ENCODE measurements at regions of chr3 and their contacts with region 1.

Region 1: GRCh38 chr3:170257145-170257544 is 34.9 kb downstream of the PRKCI start:
- DNase-seq: no peak
- ATAC-seq: peak; percentile 80
- H3K4me3 ChIP-seq: no peak overlapping the region; the same call in 1 of the 2 replicates
- H3K27ac ChIP-seq: no peak overlapping the region; the same call in 1 of the 2 replicates
- H3K4me1 ChIP-seq: peaks cover 26% of the 10 kb centered on the region
- H3K27me3 ChIP-seq: no peaks in the 10 kb centered on the region
- CTCF ChIP-seq: no peak
- EP300 ChIP-seq: peak; percentile 48 to 61; a peak in 3 of 4 replicates
- POLR2A ChIP-seq: no peak
- RAD21 ChIP-seq: no peak

Region 2: GRCh38 chr3:170180908-170181879 is 76.0 kb before region 1 on chr3 and contains the start of gene PHC3:
- CTCF ChIA-PET with region 1: interaction called, 3 read pairs
- POLR2A ChIA-PET with region 1: no interaction called
- RAD21 ChIA-PET with region 1: no interaction called
- SMC1A ChIA-PET with region 1: no interaction called
- in situ Hi-C with region 1: no loop called
- intact Hi-C with region 1: loop called (anchors 5 kb)
- DNase-seq: peak; percentile 73
- ATAC-seq: peak; percentile 80
- H3K4me3 ChIP-seq: peak within 1 kb of the TSS; percentile 89
- H3K27ac ChIP-seq: peak within 1 kb of the TSS; percentile 98
- H3K4me1 ChIP-seq: peaks cover 3% of the 10 kb centered on the region
- H3K27me3 ChIP-seq: no peaks in the 10 kb centered on the region
- CTCF ChIP-seq: 0 out of 6 replicates have a peak, but pooled peaks of 1 of the 3 experiments have one; percentile 17
- EP300 ChIP-seq: no peak
- POLR2A ChIP-seq: peak; percentile 79
- RAD21 ChIP-seq: no peak
- polyA plus RNA-seq, gene PHC3: 3.3 to 5.8 TPM

Region 3: DNA sequence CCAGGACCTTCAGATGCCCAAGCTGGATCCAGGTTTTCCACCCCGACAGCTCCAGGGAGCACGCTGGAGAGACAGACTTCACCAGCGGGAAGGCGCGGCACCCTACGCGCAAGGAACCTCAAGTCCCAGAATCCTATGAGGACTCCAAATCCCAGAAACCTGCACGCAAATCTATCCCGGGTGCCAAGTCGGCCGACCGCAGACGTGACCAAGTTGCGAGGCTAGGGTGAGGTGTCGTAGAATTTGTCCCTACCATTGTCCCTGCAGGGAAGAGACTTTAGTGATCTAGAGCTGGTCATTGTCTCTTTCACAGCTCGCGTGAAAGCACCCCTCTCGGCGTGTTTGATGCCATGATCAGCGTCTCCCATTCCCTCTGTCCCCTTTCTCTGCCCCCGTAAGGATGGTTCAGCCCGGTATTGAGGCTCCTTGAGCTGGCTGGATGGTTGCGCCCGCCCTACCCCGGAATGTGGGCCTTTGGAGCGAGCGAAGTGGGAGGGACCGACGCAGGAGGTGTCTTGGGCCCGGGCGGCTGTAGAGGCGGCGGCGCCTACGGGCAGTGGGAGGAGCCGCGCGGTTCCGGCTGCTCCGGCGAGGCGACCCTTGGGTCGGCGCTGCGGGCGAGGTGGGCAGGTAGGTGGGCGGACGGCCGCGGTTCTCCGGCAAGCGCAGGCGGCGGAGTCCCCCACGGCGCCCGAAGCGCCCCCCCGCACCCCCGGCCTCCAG is 35.1 kb before region 1 on chr3 and contains the start of gene PRKCI:
- CTCF ChIA-PET with region 1: interaction called, 5 read pairs
- POLR2A ChIA-PET with region 1: no interaction called
- RAD21 ChIA-PET with region 1: interaction called, 4 read pairs
- SMC1A ChIA-PET with region 1: interaction called, 4 read pairs
- in situ Hi-C with region 1: no loop called
- intact Hi-C with region 1: loop called (anchors 5 kb)
- DNase-seq: peak; percentile 79
- ATAC-seq: peak; percentile 96
- H3K4me3 ChIP-seq: peak within 1 kb of the TSS; percentile 92
- H3K27ac ChIP-seq: peak within 1 kb of the TSS; percentile 97
- H3K4me1 ChIP-seq: no peaks in the 10 kb centered on the region
- H3K27me3 ChIP-seq: no peaks in the 10 kb centered on the region
- CTCF ChIP-seq: no peak
- EP300 ChIP-seq: no peak
- POLR2A ChIP-seq: peak; percentile 85
- RAD21 ChIP-seq: no peak
- polyA plus RNA-seq, gene PRKCI: 3.5 to 4.9 TPM

Region 4: DNA sequence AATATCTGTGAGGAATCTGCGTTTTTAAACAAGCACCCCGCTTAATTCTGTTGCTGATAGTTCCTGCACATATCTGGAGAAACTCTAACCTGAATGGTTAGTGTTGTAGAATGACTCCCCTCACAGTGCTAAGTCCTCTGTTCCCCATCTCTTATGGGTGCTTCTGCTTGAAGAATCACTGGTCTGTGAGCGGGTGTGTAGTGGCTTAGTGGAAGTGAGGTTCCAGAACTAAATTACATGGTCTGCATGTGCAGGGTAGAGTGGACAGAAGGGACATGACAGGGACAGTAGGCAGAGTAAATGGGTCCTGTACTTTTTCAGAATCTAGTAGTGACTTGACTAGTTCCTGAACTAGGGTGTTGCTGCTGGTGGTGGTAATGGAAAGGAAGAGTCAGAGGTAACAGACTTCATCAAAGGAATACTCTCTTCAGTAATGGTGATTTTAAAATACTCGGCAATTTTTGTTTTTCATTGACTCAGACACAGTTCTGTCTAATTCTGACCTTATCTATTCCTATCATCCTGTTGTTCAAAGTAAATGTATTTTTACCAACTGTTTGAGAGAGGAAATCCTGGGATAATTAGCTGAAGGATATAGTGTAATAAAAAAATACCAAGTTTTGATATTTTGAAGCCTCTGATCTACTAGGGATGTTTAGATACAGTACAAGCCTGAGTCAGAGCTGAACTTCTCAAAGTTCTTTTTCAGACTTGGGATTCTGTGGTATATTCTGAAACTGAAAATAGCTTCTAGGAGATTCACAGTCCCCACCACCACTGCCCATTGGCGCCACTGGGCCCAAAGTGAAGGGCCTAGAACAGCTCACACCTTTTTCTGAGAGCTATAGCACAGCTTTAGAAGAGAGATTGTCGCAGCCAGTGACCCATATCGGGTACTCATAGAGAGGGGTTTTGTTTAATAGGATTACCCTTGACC is 1837.7 kb after region 1 on chr3:
- CTCF ChIA-PET with region 1: no interaction called
- POLR2A ChIA-PET with region 1: no interaction called
- RAD21 ChIA-PET with region 1: no interaction called
- SMC1A ChIA-PET with region 1: no interaction called
- in situ Hi-C with region 1: no loop called
- intact Hi-C with region 1: loop called (anchors 10 kb)
- DNase-seq: peak; percentile 62
- ATAC-seq: peak; percentile 96
- H3K4me3 ChIP-seq: no peak overlapping the region
- H3K27ac ChIP-seq: peak overlapping the region; percentile 54
- H3K4me1 ChIP-seq: peaks cover 35% of the 10 kb centered on the region
- H3K27me3 ChIP-seq: no peaks in the 10 kb centered on the region
- CTCF ChIP-seq: peak; percentile 8 to 31 (median 29); a peak in 4 of 6 replicates
- EP300 ChIP-seq: no peak; a peak in 1 of 4 replicates
- POLR2A ChIP-seq: no peak
- RAD21 ChIP-seq: peak; percentile 44

Measured in GM12878 (cell line).